Cardiac septum (tissue), 1 donor: ENCODE measurements at regions of chr16 and their contacts with region 1.

Region 1: GRCh38 chr16:19601083-19601976 is 45.8 kb downstream of the VPS35L start:
- DNase-seq: no peak

Region 2: GRCh38 chr16:19284207-19284606 is 317.1 kb before region 1 on chr16:
- intact Hi-C with region 1: no loop called
- DNase-seq: no peak

Region 3: GRCh38 chr16:19696328-19696727 is 95.0 kb after region 1 on chr16:
- intact Hi-C with region 1: loop called (anchors 10 kb)
- DNase-seq: peak; percentile 85